ENCODE measurements at regions of chr10 and their contacts with region 1.

Region 1: DNA sequence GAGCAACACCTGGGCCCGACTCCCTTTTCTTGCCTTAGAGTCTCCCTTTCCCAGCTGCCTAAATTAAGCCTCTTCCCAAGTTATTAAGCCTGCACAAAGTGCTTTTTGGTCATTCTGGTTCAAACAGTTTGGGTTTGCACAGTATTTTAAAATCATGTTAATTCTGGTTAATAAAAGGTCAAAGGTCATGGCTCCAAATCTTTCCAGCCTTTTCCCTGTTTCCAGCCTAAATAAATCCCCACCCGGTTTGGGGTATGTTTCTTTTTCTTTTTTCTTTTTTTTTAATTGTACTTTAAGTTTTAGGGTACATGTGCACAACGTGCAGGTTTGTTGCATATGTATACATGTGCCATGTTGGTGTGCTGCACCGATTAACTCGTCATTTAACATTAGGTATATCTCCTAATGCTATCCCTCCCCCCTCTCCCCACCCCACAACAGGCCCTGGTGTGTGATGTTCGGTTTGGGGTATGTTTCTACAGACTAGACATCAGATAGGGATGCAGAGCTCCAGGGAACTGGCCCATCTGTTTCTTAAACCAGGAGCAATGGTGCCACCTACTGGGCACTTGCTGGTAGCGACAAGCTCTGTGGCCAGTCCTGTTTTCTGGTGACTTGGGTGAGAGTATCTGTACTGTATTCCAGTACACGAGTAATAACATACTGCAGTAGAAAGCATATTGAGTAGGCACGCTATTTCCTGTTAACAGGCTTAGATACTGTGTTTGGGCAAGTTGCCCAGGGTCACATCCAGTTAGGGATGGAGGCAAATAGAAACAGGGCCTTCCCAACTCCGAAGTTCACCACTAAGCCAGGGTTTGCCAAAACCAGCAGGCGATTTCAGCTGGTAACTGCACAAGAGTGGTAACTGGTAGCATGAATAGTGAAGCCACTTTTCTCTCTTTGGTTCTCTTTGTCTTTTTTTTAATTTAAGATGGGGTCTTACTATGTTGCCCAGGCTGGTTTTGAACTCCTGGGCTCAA is 60.6 kb upstream of the TRIM8 start:
- DNase-seq: no peak
- H3K4me3 ChIP-seq: no peak overlapping the region
- H3K27me3 ChIP-seq: no peaks in the 10 kb centered on the region
- CTCF ChIP-seq: peak; percentile 85

Region 2: DNA sequence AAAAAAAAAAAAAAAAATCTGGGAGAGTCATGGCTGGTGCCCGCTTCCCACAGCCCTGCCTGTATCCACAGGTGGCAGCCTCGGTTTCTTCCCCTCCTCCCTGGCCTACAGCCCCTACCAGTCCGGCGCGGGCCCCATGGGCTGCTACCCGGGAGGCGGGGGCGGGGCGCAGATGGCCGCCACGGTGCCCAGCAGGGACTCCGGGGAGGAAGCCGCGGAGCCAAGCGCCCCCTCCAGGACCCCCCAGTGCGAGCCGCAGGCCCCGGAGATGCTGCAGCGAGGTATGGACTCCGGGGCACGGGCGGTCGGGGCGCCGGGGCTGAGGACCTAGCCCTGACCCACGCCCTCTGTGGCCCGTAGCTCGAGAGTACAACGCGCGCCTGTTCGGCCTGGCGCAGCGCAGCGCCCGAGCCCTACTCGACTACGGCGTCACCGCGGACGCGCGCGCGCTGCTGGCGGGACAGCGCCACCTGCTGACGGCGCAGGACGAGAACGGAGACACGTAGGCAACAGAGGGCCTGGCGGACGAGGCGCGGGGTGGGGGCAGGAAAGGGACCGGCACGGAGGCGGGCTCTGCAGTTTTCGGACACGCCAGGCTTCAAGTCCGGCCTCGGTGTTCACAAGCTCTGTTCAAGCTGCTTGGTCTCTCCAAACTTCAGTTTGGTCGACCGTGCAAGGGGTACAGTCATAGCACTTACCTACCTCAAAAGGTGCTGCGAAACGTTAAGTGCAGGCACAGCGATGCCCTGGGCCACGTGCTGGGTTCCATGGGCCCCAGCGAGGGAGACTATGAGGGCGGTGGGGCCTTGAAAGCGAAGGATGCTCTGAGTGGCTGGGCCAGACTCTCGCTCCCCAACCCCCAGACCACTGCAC is 184.3 kb before region 1 on chr10:
- CTCF ChIA-PET with region 1: interaction called, 12 read pairs
- POLR2A ChIA-PET with region 1: interaction called, 3 read pairs
- DNase-seq: no peak
- H3K4me3 ChIP-seq: peak overlapping the region; percentile 48
- H3K27me3 ChIP-seq: no peaks in the 10 kb centered on the region
- CTCF ChIP-seq: peak; percentile 86

Region 3: DNA sequence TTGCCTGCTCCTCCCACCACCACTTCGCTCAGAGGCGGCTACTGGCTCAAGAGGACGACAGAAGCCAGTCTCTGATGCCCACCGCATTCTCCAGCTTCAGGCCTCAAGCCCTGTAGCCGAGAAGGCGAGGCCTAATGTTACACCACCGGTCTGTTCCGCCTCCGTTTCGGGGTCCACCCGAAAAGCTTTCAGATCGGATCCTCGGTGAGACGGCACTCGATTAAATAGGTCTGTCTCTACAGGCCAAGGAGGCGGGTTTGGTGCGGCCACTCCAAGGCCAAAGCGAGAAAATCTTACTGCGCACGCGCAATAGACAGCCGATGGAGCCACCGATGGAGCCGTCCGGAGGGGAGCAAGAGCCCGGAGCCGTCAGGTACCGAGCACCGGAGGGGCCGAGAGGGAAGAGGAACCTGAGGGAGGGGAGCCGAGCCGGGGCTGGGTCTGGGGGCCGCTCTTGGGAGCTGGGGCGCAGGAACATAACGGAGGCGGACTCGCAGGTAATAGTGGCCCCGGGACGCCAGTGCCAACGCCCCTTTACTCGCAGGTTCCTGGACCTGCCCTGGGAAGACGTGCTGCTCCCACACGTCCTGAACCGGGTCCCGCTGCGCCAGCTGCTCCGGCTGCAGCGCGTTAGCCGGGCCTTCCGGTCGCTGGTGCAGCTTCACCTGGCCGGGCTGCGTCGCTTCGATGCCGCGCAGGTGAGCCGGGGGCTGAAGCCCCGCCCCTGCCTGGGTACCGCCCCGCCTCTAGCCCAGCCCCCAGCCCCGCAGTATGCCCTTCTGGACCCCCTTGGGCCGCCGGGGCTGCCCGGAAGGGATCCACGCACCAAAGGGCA is 162.7 kb before region 1 on chr10 and contains the start of gene FBXL15:
- CTCF ChIA-PET with region 1: interaction called, 12 read pairs
- POLR2A ChIA-PET with region 1: no interaction called
- DNase-seq: peak; percentile 68
- H3K4me3 ChIP-seq: peak within 1 kb of the TSS; percentile 82
- H3K27me3 ChIP-seq: peaks cover 4% of the 10 kb centered on the region
- CTCF ChIP-seq: no peak
- polyA plus RNA-seq, gene FBXL15: 3.5 and 7.5 TPM in 2 replicates

Region 4: DNA sequence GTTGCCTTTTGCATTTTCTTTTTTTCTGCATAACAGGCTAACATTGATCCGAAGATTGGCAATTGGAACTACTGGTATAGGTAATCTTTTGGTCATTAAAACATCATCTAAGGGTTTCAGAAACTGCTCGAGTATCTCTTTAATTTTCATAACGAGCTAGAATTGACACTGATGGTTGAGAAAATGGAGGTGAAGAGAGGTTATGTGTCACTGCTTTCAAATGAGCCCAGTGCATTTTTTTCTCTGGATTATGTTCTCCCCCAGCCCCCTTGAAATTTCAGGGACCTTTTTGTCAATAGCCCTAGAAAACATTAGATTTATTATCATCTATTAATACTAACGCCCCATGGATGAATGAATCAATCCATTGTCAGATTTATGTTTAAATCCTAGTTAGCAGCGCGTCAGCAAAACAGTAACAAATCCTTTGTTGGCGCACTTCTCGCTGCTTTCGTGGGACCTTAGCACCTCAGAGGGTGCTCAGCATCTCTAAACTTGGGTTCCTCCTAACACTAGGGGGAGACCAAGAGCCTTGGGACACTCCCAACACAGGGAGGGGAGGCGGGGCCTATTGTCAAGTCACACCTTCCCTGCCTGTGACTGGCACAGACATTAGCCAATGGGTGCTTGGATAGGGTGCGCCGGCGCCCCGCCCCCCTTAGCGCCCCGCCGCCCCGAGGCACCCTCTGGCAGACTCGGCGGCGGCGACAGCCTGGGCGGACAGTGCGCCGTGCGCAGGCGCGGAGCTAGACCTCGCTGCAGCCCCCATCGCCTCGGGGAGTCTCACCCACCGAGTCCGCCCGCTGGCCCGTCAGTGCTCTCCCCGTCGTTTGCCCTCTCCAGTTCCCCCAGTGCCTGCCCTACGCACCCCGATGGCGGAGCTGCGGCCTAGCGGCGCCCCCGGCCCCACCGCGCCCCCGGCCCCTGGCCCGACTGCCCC is 80.2 kb before region 1 on chr10 and contains the start of gene SUFU:
- CTCF ChIA-PET with region 1: interaction called, 113 read pairs
- POLR2A ChIA-PET with region 1: no interaction called
- DNase-seq: peak; percentile 79
- H3K4me3 ChIP-seq: peak within 1 kb of the TSS; percentile 91
- H3K27me3 ChIP-seq: no peaks in the 10 kb centered on the region
- CTCF ChIP-seq: peak; percentile 94
- polyA plus RNA-seq, gene SUFU: 5.3 and 8.5 TPM in 2 replicates

Region 5: GRCh38 chr10:102564209-102564834 is 19.4 kb before region 1 on chr10:
- CTCF ChIA-PET with region 1: interaction called, 5 read pairs
- POLR2A ChIA-PET with region 1: interaction called, 14 read pairs
- DNase-seq: no peak
- H3K4me3 ChIP-seq: no peak overlapping the region
- H3K27me3 ChIP-seq: no peaks in the 10 kb centered on the region
- CTCF ChIP-seq: no peak

Region 6: GRCh38 chr10:102596506-102596971 is 12.8 kb after region 1 on chr10:
- CTCF ChIA-PET with region 1: interaction called, 20 read pairs
- POLR2A ChIA-PET with region 1: no interaction called
- DNase-seq: no peak
- H3K4me3 ChIP-seq: no peak overlapping the region
- H3K27me3 ChIP-seq: no peaks in the 10 kb centered on the region
- CTCF ChIP-seq: peak; percentile 91

Region 7: DNA sequence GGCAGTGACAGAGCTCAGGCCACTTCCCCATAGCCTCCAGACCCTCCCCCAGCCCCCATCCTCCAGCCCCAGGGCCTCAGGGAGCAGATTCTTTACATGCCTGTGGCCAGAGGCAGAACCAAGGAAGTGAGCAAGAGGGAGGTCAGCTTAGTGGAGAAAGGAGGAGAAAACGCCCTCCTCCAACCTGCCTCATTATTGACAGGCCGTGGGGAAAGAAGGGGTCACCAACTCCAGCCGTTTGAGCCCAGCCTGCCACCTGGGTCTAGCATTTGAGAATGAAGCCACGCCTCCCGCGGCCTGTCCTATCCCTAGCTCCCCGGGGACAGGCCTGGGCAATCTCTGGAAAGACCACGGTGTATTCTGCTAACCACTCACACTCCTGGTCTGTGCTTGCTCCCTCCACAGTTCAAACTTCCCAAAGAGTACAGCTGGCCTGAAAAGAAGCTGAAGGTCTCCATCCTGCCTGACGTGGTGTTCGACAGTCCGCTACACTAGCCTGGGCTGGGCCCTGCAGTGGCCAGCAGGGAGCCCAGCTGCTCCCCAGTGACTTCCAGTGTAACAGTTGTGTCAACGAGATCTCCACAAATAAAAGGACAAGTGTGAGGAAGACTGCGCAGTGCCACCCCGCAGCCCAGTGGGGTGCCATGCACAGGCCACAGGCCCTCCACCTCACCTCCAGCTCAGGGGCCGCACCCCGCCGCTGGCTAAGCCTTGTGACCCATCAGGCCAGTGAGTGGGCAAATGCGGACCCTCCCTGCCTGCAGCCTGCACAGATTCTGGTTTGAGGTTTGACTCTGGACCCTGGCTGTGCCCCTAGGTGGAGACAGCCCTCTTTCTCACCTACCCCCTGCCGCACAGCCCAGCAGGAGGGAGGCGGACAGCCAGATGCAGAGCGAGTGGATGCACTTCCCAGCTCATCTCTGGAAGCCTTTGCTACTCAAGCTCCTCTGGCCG is 46.2 kb after region 1 on chr10:
- CTCF ChIA-PET with region 1: interaction called, 10 read pairs
- POLR2A ChIA-PET with region 1: no interaction called
- DNase-seq: peak; percentile 64
- H3K4me3 ChIP-seq: no peak overlapping the region
- H3K27me3 ChIP-seq: no peaks in the 10 kb centered on the region
- CTCF ChIP-seq: no peak

Region 8: DNA sequence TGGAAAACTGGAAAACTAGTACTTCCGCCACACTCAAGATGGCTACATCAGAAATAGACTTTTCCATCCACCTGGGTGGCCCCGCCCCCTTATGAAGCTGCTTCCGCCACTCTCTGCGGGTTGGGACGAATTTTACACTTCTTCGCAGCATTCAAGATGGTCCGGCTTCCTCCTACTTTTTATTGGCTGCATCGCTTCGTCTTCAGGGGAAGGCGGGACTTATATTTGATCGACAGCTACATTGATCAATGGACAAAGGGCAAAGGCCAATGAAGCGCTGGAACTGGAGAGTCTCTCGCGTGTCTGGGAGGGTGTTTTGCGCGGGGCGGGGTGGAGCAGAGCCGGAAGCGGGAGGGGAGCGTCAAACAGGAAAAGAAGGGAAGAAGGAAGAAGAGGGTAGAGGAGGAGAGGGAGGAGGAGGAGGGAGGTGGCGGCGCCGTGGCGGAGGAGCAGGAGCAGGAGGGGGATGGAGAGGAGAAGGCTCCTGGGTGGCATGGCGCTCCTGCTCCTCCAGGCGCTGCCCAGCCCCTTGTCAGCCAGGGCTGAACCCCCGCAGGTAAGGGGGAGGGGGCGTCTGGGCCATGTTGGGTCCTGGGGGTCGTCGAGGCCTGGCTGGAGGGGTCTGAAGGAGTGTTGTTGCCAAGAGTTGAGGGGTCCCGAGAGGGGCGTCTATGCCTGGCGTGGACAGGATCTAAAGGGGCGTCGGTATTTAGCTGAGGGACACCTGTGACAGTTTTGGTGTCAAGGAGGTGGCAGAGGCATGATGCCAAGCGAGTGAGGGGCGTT is 160.1 kb after region 1 on chr10 and contains the start of gene WBP1L:
- CTCF ChIA-PET with region 1: no interaction called
- POLR2A ChIA-PET with region 1: no interaction called
- DNase-seq: peak; percentile 100
- H3K4me3 ChIP-seq: peak within 1 kb of the TSS; percentile 90
- H3K27me3 ChIP-seq: no peaks in the 10 kb centered on the region
- CTCF ChIP-seq: no peak
- polyA plus RNA-seq, gene WBP1L: 45.3 and 52.4 TPM in 2 replicates

Measured in BJ (cell line).